ENCODE measurements at regions of chr10 and their contacts with region 1.

Region 1: GRCh38 chr10:116787893-116788665 is 45.7 kb upstream of the HSPA12A start:
- DNase-seq: peak; percentile 53 to 79 (median 71)
- ATAC-seq: peak; percentile 87
- H3K4me3 ChIP-seq: peak overlapping the region; percentile 1
- H3K4me3 Mint-ChIP-seq: peak overlapping the region; percentile 60
- H3K27ac ChIP-seq: no peak overlapping the region
- H3K27ac Mint-ChIP-seq: peak overlapping the region; percentile 80
- H3K4me1 ChIP-seq: peaks cover 9% of the 10 kb centered on the region
- H3K4me1 Mint-ChIP-seq: peaks cover 17% of the 10 kb centered on the region
- H3K27me3 ChIP-seq: peaks cover 0 to 4% of the 10 kb centered on the region in 2 experiments
- H3K27me3 Mint-ChIP-seq: peaks cover 52% of the 10 kb centered on the region
- CTCF ChIP-seq: peak; percentile 99

Region 2: DNA sequence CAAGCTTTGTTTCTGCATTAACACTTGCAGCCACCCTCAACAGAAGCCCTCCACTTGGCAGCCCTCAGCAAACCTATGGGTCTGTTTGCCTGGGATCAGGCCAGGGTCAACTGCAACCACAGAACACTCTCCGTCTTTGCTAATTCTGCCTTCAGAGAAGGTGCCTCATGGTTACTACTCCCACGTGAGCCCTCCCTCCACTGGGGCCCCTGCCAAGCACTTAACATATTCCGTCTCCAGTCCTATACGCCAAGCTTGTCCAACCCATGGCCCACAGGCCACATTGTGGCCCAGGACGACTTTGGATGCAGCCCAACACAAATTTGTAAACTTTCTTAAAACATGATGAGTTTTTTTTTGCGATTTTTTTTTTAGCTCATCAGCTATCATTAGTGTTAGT is 100.4 kb before region 1 on chr10:
- CTCF ChIA-PET with region 1: interaction called, 8 read pairs
- POLR2A ChIA-PET with region 1: interaction called, 3 read pairs
- intact Hi-C with region 1: loop called (anchors 1 kb)
- DNase-seq: no peak
- ATAC-seq: no peak
- H3K4me3 ChIP-seq: no peak overlapping the region
- H3K4me3 Mint-ChIP-seq: no peak overlapping the region
- H3K27ac ChIP-seq: no peak overlapping the region
- H3K27ac Mint-ChIP-seq: no peak overlapping the region
- H3K4me1 ChIP-seq: no peaks in the 10 kb centered on the region
- H3K4me1 Mint-ChIP-seq: no peaks in the 10 kb centered on the region
- H3K27me3 ChIP-seq: peaks cover 10 to 20% of the 10 kb centered on the region in 2 experiments
- H3K27me3 Mint-ChIP-seq: peaks cover 66% of the 10 kb centered on the region
- CTCF ChIP-seq: no peak

Region 3: DNA sequence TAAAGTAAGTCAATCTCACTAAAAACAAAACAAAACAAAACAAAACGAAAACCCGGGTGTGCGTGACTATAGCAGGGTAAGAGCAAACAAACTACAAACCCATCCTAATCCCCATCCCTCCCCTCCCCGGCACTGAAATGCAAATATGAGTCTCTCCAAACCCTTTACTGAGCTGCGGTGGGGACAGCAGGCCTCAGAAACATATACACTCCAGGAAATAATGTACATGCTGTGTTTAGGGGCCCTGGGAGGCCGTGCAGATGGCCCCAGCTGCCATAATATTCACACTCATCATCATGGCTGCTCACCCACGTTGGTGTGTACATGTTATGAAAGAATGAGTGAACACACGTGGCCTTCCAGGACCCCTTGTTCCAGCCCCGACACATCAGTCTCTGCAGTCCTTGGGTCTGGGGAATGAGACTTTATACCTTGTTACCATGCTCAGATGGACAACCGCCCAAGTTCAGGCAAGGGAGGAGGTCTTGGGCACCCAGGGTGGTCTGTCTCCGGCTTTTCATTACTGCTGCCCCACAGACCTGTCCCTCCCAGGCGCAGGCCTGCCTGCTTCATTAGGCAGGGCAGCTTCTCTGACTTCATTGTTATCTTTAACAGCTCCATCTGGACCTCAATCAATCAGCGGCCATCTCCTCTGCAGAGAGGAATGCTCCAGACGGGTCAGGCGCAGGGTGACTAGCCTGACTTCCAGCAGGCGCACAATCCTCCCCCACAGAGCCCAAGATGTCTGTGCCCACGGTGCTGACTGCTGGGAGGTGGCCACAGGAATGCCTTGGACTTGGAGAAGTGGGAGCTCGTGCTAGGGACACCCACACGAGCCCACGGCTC is 66.3 kb before region 1 on chr10:
- CTCF ChIA-PET with region 1: no interaction called
- POLR2A ChIA-PET with region 1: no interaction called
- intact Hi-C with region 1: loop called in 1 of 2 experiments (anchors 10 kb)
- DNase-seq: no peak
- ATAC-seq: no peak
- H3K4me3 ChIP-seq: no peak overlapping the region
- H3K4me3 Mint-ChIP-seq: no peak overlapping the region
- H3K27ac ChIP-seq: no peak overlapping the region
- H3K27ac Mint-ChIP-seq: no peak overlapping the region
- H3K4me1 ChIP-seq: peaks cover 34% of the 10 kb centered on the region
- H3K4me1 Mint-ChIP-seq: peaks cover 64% of the 10 kb centered on the region
- H3K27me3 ChIP-seq: peaks cover 72 to 84% of the 10 kb centered on the region in 2 experiments
- H3K27me3 Mint-ChIP-seq: peaks cover 96% of the 10 kb centered on the region
- CTCF ChIP-seq: no peak

Region 4: DNA sequence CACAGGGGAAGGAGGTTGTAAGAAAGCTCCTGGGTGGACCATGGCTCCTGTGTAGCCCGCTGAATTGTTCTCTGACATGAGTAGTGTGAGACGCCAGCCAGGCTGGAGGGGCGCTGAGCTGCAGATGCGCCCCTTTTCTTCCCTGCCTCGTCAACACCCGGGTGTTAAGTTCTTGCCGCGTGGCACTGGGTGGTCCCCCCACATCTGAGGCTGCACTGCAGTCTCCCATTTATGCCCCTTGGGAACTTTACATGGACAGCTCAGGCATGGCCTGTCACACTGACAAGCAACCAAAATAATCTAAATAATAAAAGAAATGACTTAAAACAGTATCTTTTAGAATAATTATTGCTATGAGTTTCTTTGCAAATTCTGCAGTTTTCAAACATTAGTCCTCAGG is 11.1 kb before region 1 on chr10:
- CTCF ChIA-PET with region 1: interaction called, 10 read pairs
- POLR2A ChIA-PET with region 1: no interaction called
- intact Hi-C with region 1: no loop called
- DNase-seq: no peak
- ATAC-seq: no peak
- H3K4me3 ChIP-seq: no peak overlapping the region
- H3K4me3 Mint-ChIP-seq: no peak overlapping the region
- H3K27ac ChIP-seq: no peak overlapping the region
- H3K27ac Mint-ChIP-seq: no peak overlapping the region
- H3K4me1 ChIP-seq: no peaks in the 10 kb centered on the region
- H3K4me1 Mint-ChIP-seq: no peaks in the 10 kb centered on the region
- H3K27me3 ChIP-seq: peaks cover 2 to 4% of the 10 kb centered on the region in 2 experiments
- H3K27me3 Mint-ChIP-seq: peaks cover 38% of the 10 kb centered on the region
- CTCF ChIP-seq: no peak